ENCODE measurements at regions of chrX and their contacts with region 1.

Region 1: GRCh38 chrX:68828740-68829552 is at the start of gene EFNB1:
- DNase-seq: peak; percentile 89 to 93
- H3K4me3 ChIP-seq: peak within 1 kb of the TSS; percentile 86
- H3K27ac ChIP-seq: no peak within 1 kb of the TSS
- H3K4me1 ChIP-seq: peaks cover 13% of the 10 kb centered on the region
- H3K27me3 ChIP-seq: no peaks in the 10 kb centered on the region
- CTCF ChIP-seq: no peak
- total RNA-seq, gene EFNB1: 31.1 and 35.2 TPM in 2 replicates

Region 2: DNA sequence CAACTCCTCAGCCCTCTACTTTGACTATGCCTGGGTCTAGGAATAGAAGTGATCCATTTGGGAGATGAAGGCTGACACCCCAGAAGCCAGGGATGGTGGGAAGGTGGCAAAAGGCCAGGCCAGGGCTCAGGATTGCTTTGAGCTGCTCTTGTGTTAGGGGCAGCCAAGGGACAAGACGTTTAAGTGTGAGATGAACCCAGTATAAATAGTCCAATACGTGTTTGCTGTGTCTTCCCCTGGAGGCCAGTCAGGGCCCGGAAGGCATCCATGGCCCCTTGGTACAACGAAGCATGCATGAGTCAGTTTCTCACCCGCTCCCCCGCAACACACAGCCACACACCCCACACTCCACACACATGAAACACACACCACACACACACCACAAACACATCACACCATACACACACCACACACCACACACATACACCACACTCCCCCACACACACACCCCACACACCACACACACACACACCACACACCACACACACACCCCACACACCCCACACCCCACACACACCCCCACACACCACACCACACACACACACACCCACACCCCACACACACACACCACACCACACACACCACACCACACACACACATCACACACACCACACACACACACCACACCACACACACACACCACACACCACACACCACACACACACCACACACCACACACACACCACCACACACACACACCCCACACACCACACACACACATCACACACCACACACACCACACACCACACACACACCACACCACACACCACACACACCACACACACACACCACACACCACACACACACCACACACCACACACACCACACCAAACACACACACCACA is 176.4 kb before region 1 on chrX:
- CTCF ChIA-PET with region 1: no interaction called
- POLR2A ChIA-PET with region 1: no interaction called
- intact Hi-C with region 1: no loop called
- DNase-seq: no peak
- H3K4me3 ChIP-seq: no peak overlapping the region
- H3K27ac ChIP-seq: no peak overlapping the region
- H3K4me1 ChIP-seq: no peaks in the 10 kb centered on the region
- H3K27me3 ChIP-seq: peaks cover 6% of the 10 kb centered on the region; the same call in 1 of the 2 replicates
- CTCF ChIP-seq: no peak

Region 3: DNA sequence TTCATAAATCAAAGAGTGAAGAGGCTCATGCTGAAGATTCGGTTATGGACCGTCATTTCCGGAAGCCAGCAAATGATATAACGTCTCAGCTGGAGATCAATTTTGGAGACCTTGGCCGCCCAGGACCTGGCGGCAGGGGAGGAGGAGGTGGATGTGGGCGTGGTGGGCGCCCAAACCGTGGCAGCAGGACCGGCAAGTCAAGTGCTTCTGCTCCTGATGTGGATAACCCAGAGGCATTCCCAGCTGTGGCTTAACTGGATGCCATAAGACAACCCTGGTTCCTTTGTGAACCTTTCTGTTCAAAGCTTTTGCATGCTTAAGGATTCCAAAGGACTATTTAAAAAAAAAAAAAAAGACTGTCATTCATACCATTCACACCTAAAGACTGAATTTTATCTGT is 44.1 kb before region 1 on chrX:
- CTCF ChIA-PET with region 1: no interaction called
- POLR2A ChIA-PET with region 1: no interaction called
- intact Hi-C with region 1: no loop called
- DNase-seq: no peak
- H3K4me3 ChIP-seq: no peak overlapping the region
- H3K27ac ChIP-seq: no peak overlapping the region
- H3K4me1 ChIP-seq: no peaks in the 10 kb centered on the region
- H3K27me3 ChIP-seq: peaks cover 4% of the 10 kb centered on the region; the same call in 1 of the 2 replicates
- CTCF ChIP-seq: no peak

Region 4: DNA sequence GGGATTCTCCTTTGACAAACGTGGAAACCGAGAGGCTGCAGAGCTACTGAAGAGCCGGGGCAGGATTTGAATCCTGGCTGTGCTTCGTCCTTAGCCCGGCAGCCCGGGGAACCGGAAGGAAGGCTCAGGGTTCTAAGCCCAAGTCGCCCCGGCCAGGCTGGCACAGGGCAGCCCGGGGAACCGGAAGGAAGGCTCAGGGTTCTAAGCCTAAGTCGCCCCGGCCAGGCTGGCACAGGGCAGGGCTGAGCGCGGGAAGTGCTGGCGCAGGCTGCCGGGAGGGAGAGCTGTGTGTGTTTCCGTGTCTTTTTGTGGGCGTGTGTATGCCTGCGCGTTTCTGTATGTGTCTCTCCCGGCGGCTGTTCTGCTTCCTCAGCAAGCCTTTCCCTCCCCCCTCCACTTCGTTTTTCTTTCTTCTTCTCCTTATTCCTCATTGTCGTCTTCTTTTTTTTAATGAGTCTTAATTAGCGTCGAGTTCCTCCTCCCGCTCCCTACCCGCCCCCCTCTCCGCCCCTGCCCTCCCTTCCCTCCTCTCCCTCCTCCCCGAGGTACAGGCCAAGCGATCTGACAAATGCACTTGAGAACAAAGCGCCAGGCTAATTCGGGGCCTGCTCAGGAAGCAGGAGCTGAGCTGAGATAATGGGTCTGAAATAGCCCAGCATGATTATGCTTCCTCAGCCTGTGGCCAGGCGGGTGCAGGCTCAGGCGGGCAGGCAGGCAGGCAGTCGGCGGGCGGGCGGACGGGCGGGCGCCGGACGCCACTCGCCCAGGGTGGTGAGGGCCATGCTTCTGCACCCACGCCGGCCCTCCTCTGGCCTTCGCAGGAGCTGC is 65.8 kb after region 1 on chrX:
- CTCF ChIA-PET with region 1: no interaction called
- POLR2A ChIA-PET with region 1: interaction called, 7 read pairs
- intact Hi-C with region 1: loop called (anchors 1 kb)
- DNase-seq: peak in 1 of 2 experiments; percentile 34
- H3K4me3 ChIP-seq: no peak overlapping the region
- H3K27ac ChIP-seq: no peak overlapping the region
- H3K4me1 ChIP-seq: peaks cover 7% of the 10 kb centered on the region
- H3K27me3 ChIP-seq: peaks cover 5% of the 10 kb centered on the region; the same call in 1 of the 2 replicates
- CTCF ChIP-seq: no peak

Region 5: DNA sequence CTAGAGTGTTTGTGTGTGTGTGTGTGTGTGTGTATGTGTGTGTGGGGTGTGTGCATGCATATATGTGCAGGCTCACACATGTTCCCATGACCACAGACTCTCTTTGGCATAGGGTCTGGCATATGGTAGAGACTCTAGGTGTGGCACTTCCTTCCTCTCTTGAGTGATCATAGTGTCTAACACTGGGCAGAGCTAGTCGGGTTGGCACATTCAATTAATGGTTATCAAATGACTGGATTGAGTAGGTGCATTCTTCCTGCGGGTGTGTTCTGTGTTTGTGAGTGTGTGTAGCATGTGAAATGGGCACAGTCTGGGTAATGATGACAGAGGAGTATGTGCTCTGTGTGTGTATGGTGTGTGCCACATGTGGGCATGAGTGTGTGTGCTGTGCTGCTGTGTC is 106.4 kb after region 1 on chrX:
- CTCF ChIA-PET with region 1: no interaction called
- POLR2A ChIA-PET with region 1: interaction called, 13 read pairs
- intact Hi-C with region 1: loop called (anchors 2 kb)
- DNase-seq: no peak
- H3K4me3 ChIP-seq: no peak overlapping the region
- H3K27ac ChIP-seq: no peak overlapping the region
- H3K4me1 ChIP-seq: peaks cover 10% of the 10 kb centered on the region
- H3K27me3 ChIP-seq: no peaks in the 10 kb centered on the region
- CTCF ChIP-seq: no peak

Region 6: GRCh38 chrX:68995780-68996551 is 167.0 kb after region 1 on chrX:
- CTCF ChIA-PET with region 1: no interaction called
- POLR2A ChIA-PET with region 1: no interaction called
- intact Hi-C with region 1: loop called (anchors 1 kb)
- DNase-seq: no peak
- H3K4me3 ChIP-seq: no peak overlapping the region
- H3K27ac ChIP-seq: no peak overlapping the region
- H3K4me1 ChIP-seq: peaks cover 28% of the 10 kb centered on the region
- H3K27me3 ChIP-seq: no peaks in the 10 kb centered on the region
- CTCF ChIP-seq: no peak

Region 7: GRCh38 chrX:69060631-69061408 is 231.9 kb after region 1 on chrX:
- CTCF ChIA-PET with region 1: interaction called, 14 read pairs
- POLR2A ChIA-PET with region 1: interaction called, 3 read pairs
- intact Hi-C with region 1: loop called (anchors 1 kb)
- DNase-seq: peak in 1 of 2 experiments; percentile 41
- H3K4me3 ChIP-seq: no peak overlapping the region
- H3K27ac ChIP-seq: no peak overlapping the region
- H3K4me1 ChIP-seq: no peaks in the 10 kb centered on the region
- H3K27me3 ChIP-seq: no peaks in the 10 kb centered on the region
- CTCF ChIP-seq: peak; percentile 54; the same call in 1 of the 2 replicates

Region 8: DNA sequence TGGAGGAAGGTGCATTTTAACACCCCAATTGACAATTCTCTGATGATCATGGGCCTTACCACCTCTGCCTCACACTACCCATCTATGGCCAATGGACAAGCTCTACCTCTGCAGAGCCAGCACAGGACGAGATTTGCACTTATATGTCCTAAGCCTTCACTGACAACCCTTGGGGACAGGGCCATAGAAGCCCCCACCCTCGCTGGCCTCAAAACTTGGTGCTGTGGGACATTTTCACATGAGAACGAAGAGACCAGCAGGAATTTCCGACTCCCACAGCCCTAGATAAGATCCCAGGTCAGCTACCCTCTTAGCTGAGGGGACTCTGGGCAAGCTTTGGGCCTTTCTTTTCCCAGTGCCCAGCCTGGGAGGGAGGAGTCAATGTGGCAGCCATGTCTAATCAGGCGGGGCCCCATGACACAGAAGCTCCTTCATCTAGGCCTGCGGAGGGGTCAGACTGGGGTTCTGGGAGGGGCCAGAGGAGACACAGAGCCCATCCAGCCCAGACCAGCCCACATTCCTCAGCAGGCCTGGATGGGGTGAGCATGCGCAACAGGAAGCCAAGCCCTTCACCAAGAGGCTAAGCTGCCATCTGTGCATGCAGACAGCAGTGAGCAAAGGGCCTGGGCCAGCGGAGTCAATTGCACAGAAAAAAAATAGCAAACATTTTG is 324.2 kb after region 1 on chrX:
- CTCF ChIA-PET with region 1: no interaction called
- POLR2A ChIA-PET with region 1: interaction called, 7 read pairs
- intact Hi-C with region 1: loop called (anchors 2 kb)
- DNase-seq: peak; percentile 53 to 55
- H3K4me3 ChIP-seq: no peak overlapping the region
- H3K27ac ChIP-seq: peak overlapping the region; percentile 90
- H3K4me1 ChIP-seq: peaks cover 49% of the 10 kb centered on the region
- H3K27me3 ChIP-seq: no peaks in the 10 kb centered on the region
- CTCF ChIP-seq: no peak

Region 9: DNA sequence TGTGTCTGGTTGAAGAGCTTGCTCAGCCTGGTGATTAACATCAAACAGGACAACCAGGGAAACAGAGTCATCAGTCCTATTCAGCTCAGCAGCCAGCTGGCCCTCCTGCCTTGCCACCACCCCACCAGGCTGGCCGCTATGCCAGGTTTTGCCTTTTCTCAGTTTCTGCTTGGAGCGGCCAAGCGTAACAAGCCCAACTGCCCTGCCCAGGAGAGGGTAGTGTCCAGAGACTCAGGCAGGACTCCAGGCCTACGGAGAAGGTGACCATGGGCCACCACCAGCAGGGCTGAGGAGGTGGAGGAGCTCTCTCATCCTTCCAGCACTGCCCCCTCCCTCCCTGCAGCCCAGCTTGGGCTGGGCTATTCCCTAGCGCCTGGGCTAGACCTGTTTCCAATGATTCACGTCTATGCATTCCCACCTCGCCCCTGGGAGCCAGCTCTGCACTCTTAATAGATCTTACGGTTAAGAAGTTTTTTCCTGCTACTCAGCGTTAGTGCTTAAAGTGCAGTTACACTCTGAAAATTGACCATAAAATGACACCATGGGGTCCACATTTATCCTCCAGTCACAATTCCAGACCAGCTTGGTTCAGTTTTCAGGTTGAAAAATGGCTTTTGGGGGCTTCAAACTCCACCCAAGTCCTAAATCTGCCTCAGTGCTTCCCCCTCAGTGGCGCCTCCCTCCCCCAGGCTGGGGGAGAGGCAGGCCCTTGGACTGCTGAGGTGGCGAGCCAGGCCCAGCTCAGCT is 460.3 kb after region 1 on chrX:
- CTCF ChIA-PET with region 1: no interaction called
- POLR2A ChIA-PET with region 1: no interaction called
- intact Hi-C with region 1: no loop called
- DNase-seq: no peak
- H3K4me3 ChIP-seq: no peak overlapping the region
- H3K27ac ChIP-seq: no peak overlapping the region
- H3K4me1 ChIP-seq: no peaks in the 10 kb centered on the region
- H3K27me3 ChIP-seq: 0 out of 2 replicates have a peak, but pooled peaks cover 4% of the 10 kb centered on the region
- CTCF ChIP-seq: no peak

Region 10: GRCh38 chrX:70133303-70134115 is 1304.6 kb after region 1 on chrX and contains the start of gene IGBP1:
- CTCF ChIA-PET with region 1: interaction called, 10 read pairs
- POLR2A ChIA-PET with region 1: no interaction called
- intact Hi-C with region 1: no loop called
- DNase-seq: peak; percentile 78 to 88
- H3K4me3 ChIP-seq: peak within 1 kb of the TSS; percentile 99
- H3K27ac ChIP-seq: peak within 1 kb of the TSS; percentile 74
- H3K4me1 ChIP-seq: peaks cover 20% of the 10 kb centered on the region
- H3K27me3 ChIP-seq: no peaks in the 10 kb centered on the region
- CTCF ChIP-seq: peak; percentile 70
- total RNA-seq, gene IGBP1: 57.6 and 71.9 TPM in 2 replicates